HEK293 (cell line): ENCODE measurements at regions of chr10 and their contacts with region 1.

Region 1: DNA sequence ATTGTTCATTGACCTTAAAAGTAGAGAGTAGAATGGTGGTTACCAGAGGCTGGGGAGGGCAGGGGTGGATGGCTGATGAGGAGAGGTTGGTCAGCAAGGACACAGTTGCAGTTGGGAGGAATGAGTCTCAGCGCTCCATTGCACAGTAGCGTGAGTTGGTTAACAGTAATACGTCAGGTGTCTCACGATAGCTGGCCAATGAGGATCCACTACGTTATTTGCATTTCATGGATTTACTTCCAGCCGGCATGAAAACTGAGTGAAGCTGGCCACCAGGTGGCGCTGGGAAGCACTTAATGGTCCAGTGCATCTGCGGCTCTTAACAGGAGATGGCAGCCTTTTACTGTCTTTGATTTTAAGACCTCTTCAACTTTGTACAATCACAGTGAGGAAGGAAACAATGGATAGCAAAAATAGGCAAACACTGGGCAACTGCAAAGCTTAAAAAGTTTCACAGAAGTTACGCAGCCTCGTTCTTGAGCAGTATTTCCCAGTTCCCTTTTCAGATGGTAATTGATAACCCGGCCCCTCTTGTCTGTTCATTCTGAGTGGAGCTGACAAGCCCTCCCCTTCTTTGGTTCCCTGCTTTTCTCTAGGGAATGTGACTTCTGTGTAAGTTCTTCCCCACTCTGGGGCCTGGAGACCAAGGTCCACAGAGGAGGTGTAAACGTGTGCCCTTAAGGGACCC is 23.7 kb downstream of the AKR1E2 start:
- H3K4me3 ChIP-seq: no peak overlapping the region
- H3K27ac ChIP-seq: no peak overlapping the region
- H3K4me1 ChIP-seq: no peaks in the 10 kb centered on the region
- CTCF ChIP-seq: peak; percentile 93

Region 2: GRCh38 chr10:4802706-4803487 is 46.8 kb before region 1 on chr10:
- CTCF ChIA-PET with region 1: no interaction called
- POLR2A ChIA-PET with region 1: no interaction called
- H3K4me3 ChIP-seq: no peak overlapping the region
- H3K27ac ChIP-seq: no peak overlapping the region
- H3K4me1 ChIP-seq: no peaks in the 10 kb centered on the region
- CTCF ChIP-seq: no peak

Region 3: GRCh38 chr10:4813023-4813422 is 36.7 kb before region 1 on chr10:
- CTCF ChIA-PET with region 1: interaction called, 11 read pairs
- POLR2A ChIA-PET with region 1: interaction called, 3 read pairs
- H3K4me3 ChIP-seq: no peak overlapping the region
- H3K27ac ChIP-seq: no peak overlapping the region
- H3K4me1 ChIP-seq: no peaks in the 10 kb centered on the region
- CTCF ChIP-seq: no peak

Region 4: GRCh38 chr10:4839401-4839800 is 10.3 kb before region 1 on chr10:
- CTCF ChIA-PET with region 1: interaction called, 93 read pairs
- POLR2A ChIA-PET with region 1: interaction called, 3 read pairs
- H3K4me3 ChIP-seq: no peak overlapping the region
- H3K27ac ChIP-seq: no peak overlapping the region
- H3K4me1 ChIP-seq: no peaks in the 10 kb centered on the region
- CTCF ChIP-seq: no peak

Region 5: GRCh38 chr10:4947635-4948596 is 98.2 kb after region 1 on chr10:
- CTCF ChIA-PET with region 1: interaction called, 12 read pairs
- POLR2A ChIA-PET with region 1: no interaction called
- H3K4me3 ChIP-seq: no peak overlapping the region
- H3K27ac ChIP-seq: no peak overlapping the region
- H3K4me1 ChIP-seq: no peaks in the 10 kb centered on the region
- CTCF ChIP-seq: no peak

Region 6: DNA sequence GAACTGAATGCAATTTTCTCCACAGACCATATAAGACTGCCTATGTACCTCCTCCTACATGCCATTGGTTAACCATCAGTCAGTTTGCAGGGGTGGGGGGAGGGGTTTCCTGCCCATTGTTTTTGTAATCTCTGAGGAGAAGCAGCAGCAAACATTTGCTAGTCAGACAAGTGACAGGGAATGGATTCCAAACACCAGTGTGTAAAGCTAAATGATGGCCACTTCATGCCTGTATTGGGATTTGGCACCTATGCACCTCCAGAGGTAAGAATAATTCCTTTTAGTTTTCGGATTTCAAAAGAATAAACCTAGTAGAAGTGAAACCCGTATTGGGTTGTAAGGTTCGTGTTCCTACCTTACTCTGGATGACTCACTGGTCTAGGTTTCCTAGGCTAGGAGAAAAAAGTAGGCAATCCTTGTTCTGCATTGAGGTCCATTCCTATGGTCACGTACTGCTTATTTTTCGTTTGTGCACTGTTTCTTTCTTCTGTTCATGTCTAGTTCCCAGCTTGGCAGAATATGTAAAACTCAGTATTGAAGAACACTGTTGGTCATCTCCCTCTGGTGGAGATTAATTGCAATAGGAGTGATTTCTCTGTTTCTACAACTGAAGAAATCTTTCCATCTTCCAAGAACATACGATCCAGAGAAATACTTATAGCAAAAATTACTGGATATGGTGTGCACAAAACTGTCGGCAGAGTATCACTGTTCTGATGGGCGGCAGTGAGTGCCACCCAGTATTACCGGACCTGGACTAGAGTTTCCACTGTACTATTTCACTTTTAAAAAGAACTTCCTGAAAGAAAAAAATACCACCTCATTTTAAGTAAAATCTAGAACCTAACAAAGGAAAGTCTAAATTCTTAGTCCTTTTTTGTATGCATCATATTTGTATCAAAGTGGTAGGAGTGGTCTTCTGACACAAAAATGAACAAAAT is 244.8 kb after region 1 on chr10 and contains the start of gene AKR1C3:
- CTCF ChIA-PET with region 1: interaction called, 54 read pairs
- POLR2A ChIA-PET with region 1: no interaction called
- H3K4me3 ChIP-seq: peak within 1 kb of the TSS; percentile 42
- H3K27ac ChIP-seq: no peak within 1 kb of the TSS
- H3K4me1 ChIP-seq: no peaks in the 10 kb centered on the region
- CTCF ChIP-seq: no peak

Region 7: GRCh38 chr10:5283305-5284158 is 433.8 kb after region 1 on chr10:
- CTCF ChIA-PET with region 1: interaction called, 48 read pairs
- POLR2A ChIA-PET with region 1: no interaction called
- H3K4me3 ChIP-seq: no peak overlapping the region
- H3K27ac ChIP-seq: no peak overlapping the region
- H3K4me1 ChIP-seq: no peaks in the 10 kb centered on the region
- CTCF ChIP-seq: peak; percentile 53; the same call in 1 of the 2 replicates